ENCODE measurements at regions of chr5 and their contacts with region 1.

Region 1: DNA sequence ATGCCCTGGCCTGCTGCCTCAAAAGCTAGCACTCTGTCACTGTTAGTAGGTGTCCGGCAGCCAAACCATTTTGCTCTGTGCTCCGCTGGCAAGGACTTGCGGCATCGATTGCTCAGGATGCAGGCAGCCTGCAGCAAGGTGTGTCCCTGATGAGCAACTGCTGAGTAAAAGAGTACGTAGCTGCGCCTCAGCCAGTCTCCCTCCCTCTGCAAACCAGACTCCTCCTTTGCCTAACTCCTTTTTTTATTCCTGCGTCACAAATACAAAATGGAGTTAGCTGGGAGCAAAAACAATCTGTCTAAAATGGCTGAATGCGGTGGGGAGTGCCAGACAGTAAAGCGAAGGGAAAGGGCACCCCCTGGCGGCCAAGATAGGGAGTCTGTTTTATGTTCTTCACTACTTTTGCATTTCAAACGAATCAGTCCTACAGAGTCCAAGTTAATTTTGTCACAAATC is 61.1 kb downstream of the DIAPH1 start:
- DNase-seq: peak; percentile 87
- ATAC-seq: peak; percentile 81
- H3K4me3 Mint-ChIP-seq: no peak overlapping the region
- H3K27ac Mint-ChIP-seq: peak overlapping the region; percentile 18
- H3K4me1 Mint-ChIP-seq: peaks cover 20% of the 10 kb centered on the region
- H3K27me3 Mint-ChIP-seq: no peaks in the 10 kb centered on the region
- CTCF ChIP-seq: peak; percentile 94

Region 2: DNA sequence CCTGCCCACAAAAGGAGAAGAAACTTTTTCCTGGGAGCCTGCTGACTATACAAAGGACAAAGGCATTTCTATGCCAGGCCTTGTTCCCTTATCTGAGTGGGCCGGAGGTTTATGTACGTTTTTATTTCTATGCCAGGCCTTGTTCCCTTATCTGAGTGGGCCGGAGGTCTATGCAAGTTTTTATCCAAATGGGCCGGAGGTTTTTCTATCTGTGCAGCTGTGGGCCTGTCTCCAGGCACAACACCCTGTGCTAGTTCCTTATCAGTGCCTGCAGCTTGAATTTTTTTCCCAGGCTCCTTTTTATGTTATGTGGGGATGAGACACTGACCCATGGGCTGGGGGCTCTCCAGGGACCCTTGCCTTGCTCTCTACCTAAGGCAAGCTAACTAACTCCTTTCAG is 259.3 kb before region 1 on chr5:
- CTCF ChIA-PET with region 1: no interaction called
- POLR2A ChIA-PET with region 1: no interaction called
- intact Hi-C with region 1: no loop called
- DNase-seq: no peak
- ATAC-seq: no peak
- H3K4me3 Mint-ChIP-seq: no peak overlapping the region
- H3K27ac Mint-ChIP-seq: no peak overlapping the region
- H3K4me1 Mint-ChIP-seq: no peaks in the 10 kb centered on the region
- H3K27me3 Mint-ChIP-seq: no peaks in the 10 kb centered on the region
- CTCF ChIP-seq: no peak

Region 3: GRCh38 chr5:141320225-141321169 is 237.2 kb before region 1 on chr5 and contains the start of gene TAF7:
- CTCF ChIA-PET with region 1: interaction called, 12 read pairs
- POLR2A ChIA-PET with region 1: no interaction called
- intact Hi-C with region 1: loop called (anchors 10 kb)
- DNase-seq: peak; percentile 93
- ATAC-seq: peak; percentile 93
- H3K4me3 Mint-ChIP-seq: peak within 1 kb of the TSS; percentile 95
- H3K27ac Mint-ChIP-seq: peak within 1 kb of the TSS; percentile 98
- H3K4me1 Mint-ChIP-seq: peaks cover 25% of the 10 kb centered on the region
- H3K27me3 Mint-ChIP-seq: no peaks in the 10 kb centered on the region
- CTCF ChIP-seq: peak; percentile 89
- total RNA-seq, gene TAF7: 56.2 to 58.1 TPM

Region 4: GRCh38 chr5:141402553-141403260 is 155.0 kb before region 1 on chr5 and contains the start of gene PCDHGA9:
- CTCF ChIA-PET with region 1: interaction called, 15 read pairs
- POLR2A ChIA-PET with region 1: no interaction called
- intact Hi-C with region 1: no loop called
- DNase-seq: peak; percentile 42
- ATAC-seq: peak; percentile 42
- H3K4me3 Mint-ChIP-seq: no peak within 1 kb of the TSS
- H3K27ac Mint-ChIP-seq: no peak within 1 kb of the TSS
- H3K4me1 Mint-ChIP-seq: no peaks in the 10 kb centered on the region
- H3K27me3 Mint-ChIP-seq: peaks cover 62% of the 10 kb centered on the region
- CTCF ChIP-seq: peak; percentile 47
- total RNA-seq, gene PCDHGA9: 0.09 TPM in 1 of 2 experiments, not detected in the other

Region 5: DNA sequence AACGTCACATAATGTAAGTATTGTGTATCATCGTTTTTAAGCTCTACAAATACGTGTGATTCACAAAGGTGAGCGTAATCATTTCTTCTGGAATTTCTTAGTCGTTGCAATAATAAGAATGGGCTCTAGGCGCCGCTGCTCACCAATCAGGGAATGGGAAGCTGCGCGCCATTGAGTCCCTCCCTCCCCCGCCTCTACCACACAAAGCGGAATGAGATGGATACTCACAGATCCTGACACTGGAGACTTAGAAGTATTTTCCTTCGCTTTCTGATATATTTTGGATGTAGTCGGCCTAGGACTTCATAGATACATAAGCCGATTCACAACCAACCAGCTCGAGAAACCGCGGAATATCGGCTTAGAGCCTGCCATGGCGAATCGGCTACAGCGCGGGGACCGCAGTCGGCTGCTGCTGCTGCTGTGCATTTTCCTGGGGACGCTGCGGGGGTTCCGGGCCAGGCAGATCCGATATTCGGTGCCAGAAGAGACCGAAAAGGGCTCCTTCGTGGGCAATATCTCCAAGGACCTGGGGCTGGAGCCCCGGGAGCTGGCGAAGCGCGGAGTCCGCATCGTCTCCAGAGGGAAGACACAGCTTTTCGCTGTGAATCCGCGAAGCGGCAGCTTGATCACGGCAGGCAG is 136.7 kb before region 1 on chr5 and contains the start of gene PCDHGA11:
- CTCF ChIA-PET with region 1: interaction called, 19 read pairs
- POLR2A ChIA-PET with region 1: no interaction called
- intact Hi-C with region 1: no loop called
- DNase-seq: peak; percentile 69
- ATAC-seq: peak; percentile 61
- H3K4me3 Mint-ChIP-seq: peak within 1 kb of the TSS; percentile 74
- H3K27ac Mint-ChIP-seq: no peak within 1 kb of the TSS
- H3K4me1 Mint-ChIP-seq: peaks cover 8% of the 10 kb centered on the region
- H3K27me3 Mint-ChIP-seq: peaks cover 72% of the 10 kb centered on the region
- CTCF ChIP-seq: peak; percentile 76
- total RNA-seq, gene PCDHGA11: not detected

Region 6: GRCh38 chr5:141430332-141431113 is 127.2 kb before region 1 on chr5 and contains the start of gene PCDHGA12:
- CTCF ChIA-PET with region 1: interaction called, 18 read pairs
- POLR2A ChIA-PET with region 1: no interaction called
- intact Hi-C with region 1: no loop called
- DNase-seq: peak; percentile 63
- ATAC-seq: peak; percentile 83
- H3K4me3 Mint-ChIP-seq: peak within 1 kb of the TSS; percentile 35
- H3K27ac Mint-ChIP-seq: no peak within 1 kb of the TSS
- H3K4me1 Mint-ChIP-seq: peaks cover 5% of the 10 kb centered on the region
- H3K27me3 Mint-ChIP-seq: peaks cover 58% of the 10 kb centered on the region
- CTCF ChIP-seq: peak; percentile 36
- total RNA-seq, gene PCDHGA12: not detected

Region 7: GRCh38 chr5:141532726-141533125 is 25.0 kb before region 1 on chr5:
- CTCF ChIA-PET with region 1: interaction called, 12 read pairs
- POLR2A ChIA-PET with region 1: no interaction called
- intact Hi-C with region 1: no loop called
- DNase-seq: no peak
- ATAC-seq: no peak
- H3K4me3 Mint-ChIP-seq: no peak overlapping the region
- H3K27ac Mint-ChIP-seq: no peak overlapping the region
- H3K4me1 Mint-ChIP-seq: peaks cover 2% of the 10 kb centered on the region
- H3K27me3 Mint-ChIP-seq: no peaks in the 10 kb centered on the region
- CTCF ChIP-seq: no peak

Region 8: GRCh38 chr5:141547488-141547887 is 10.2 kb before region 1 on chr5:
- CTCF ChIA-PET with region 1: interaction called, 58 read pairs
- POLR2A ChIA-PET with region 1: no interaction called
- intact Hi-C with region 1: no loop called
- DNase-seq: no peak
- ATAC-seq: no peak
- H3K4me3 Mint-ChIP-seq: no peak overlapping the region
- H3K27ac Mint-ChIP-seq: no peak overlapping the region
- H3K4me1 Mint-ChIP-seq: peaks cover 28% of the 10 kb centered on the region
- H3K27me3 Mint-ChIP-seq: no peaks in the 10 kb centered on the region
- CTCF ChIP-seq: no peak

Measured in activated CD8-positive, alpha-beta T cell treated with anti-CD3 and anti-CD28 coated beads for 36 hours (primary cell).